ENCODE measurements at regions of chr6 and their contacts with region 1.

Region 1: DNA sequence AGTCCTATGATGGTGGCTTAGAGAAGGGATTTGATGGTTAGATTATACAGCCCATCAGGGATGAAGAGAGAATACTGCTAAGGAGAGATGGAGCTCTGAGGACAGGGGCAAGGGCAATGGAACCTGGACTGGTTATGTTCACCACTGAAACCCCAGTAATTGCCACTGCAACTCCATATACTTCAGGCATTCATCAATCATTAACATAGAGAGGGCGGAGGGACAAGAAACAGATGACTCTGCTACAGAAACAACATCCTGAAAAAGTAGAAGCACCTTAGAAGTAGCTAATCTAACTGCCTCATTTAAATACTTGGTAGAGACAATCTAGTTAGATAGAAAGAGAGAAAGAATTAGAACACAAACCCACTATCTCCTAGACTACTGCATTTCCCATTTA is 89.8 kb downstream of the MDN1 start:
- DNase-seq: no peak
- ATAC-seq: no peak
- H3K4me3 Mint-ChIP-seq: no peak overlapping the region
- H3K27ac Mint-ChIP-seq: no peak overlapping the region
- H3K4me1 Mint-ChIP-seq: no peaks in the 10 kb centered on the region
- H3K27me3 Mint-ChIP-seq: no peaks in the 10 kb centered on the region

Region 2: GRCh38 chr6:89711801-89712200 is 18.0 kb before region 1 on chr6:
- CTCF ChIA-PET with region 1: no interaction called
- POLR2A ChIA-PET with region 1: no interaction called
- intact Hi-C with region 1: loop called in 1 of 2 experiments (anchors 2 kb)
- DNase-seq: no peak
- ATAC-seq: no peak
- H3K4me3 Mint-ChIP-seq: no peak overlapping the region
- H3K27ac Mint-ChIP-seq: no peak overlapping the region
- H3K4me1 Mint-ChIP-seq: no peaks in the 10 kb centered on the region
- H3K27me3 Mint-ChIP-seq: no peaks in the 10 kb centered on the region

Measured in activated CD4-positive, alpha-beta T cell treated with anti-CD3 and anti-CD28 coated beads for 36 hours (primary cell).